Prostate gland (tissue), 2 donors: ENCODE measurements at regions of chr5 and their contacts with region 1.

Region 1: GRCh38 chr5:179313849-179314521 is 31.3 kb downstream of the ADAMTS2 start:
- DNase-seq: peak; percentile 30
- H3K4me3 ChIP-seq: no peak overlapping the region
- H3K27ac ChIP-seq: peak overlapping the region in 1 of 2 donors; percentile 39
- H3K4me1 ChIP-seq: no peaks in the 10 kb centered on the region
- H3K27me3 ChIP-seq: no peaks in the 10 kb centered on the region
- CTCF ChIP-seq: no peak
- POLR2A ChIP-seq: no peak

Region 2: DNA sequence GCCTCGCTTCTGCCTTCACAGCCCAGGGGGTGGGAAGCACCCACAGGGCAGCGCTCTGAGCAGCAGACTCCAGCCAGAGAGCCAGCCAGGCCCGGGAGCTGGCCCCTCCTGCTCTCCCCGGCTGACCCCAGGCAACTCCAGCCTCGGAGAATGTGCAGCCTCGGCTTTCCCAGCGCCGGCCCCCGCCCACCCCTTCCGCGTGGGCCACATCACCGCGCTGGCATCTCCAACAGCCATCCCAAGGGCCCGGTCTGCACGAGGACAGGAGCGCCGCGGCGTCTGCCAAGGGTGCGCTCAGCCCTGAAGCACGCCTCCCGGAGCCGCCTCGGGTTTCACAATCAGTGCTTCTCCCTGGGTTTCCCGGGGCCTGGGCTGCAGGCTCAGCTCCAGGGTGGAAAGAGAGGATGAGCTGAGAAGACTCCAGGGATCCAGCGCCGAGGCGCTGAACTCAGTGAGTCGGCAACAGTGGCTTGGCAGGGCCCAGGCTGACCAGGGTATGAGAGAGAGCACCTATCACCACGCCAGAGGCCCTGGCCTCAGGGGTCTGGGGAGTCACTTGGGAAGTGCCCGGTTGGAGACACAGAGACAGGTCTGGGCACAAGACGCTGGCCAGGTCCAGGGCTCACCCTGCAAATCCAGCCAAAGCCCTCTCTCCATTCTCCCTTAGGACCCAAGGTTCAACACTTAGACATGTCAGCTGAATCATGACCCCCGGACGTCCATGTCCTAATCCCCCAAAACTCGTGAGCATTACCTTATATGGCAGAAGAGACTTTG is 48.3 kb before region 1 on chr5:
- intact Hi-C with region 1: loop called (anchors 2 kb)
- DNase-seq: peak; percentile 28
- H3K4me3 ChIP-seq: no peak overlapping the region
- H3K27ac ChIP-seq: peak overlapping the region; percentile 31 to 61
- H3K4me1 ChIP-seq: no peaks in the 10 kb centered on the region
- H3K27me3 ChIP-seq: peaks cover 4% of the 10 kb centered on the region
- CTCF ChIP-seq: no peak
- POLR2A ChIP-seq: no peak